SK-N-SH (cell line): ENCODE measurements at regions of chr1 and their contacts with region 1.

Region 1: GRCh38 chr1:44217809-44218410 is 4.6 kb downstream of the DMAP1 start:
- DNase-seq: peak; percentile 84
- H3K4me3 ChIP-seq: no peak overlapping the region; a peak in 1 of 4 replicates
- H3K27ac ChIP-seq: no peak overlapping the region
- H3K4me1 ChIP-seq: peaks cover 0 to 12% of the 10 kb centered on the region in 2 experiments; a peak in 1 of 4 replicates
- H3K27me3 ChIP-seq: no peaks in the 10 kb centered on the region
- CTCF ChIP-seq: peak; percentile 91
- EP300 ChIP-seq: no peak
- RAD21 ChIP-seq: peak; percentile 89

Region 2: GRCh38 chr1:43952731-43953346 is 265.1 kb before region 1 on chr1:
- CTCF ChIA-PET with region 1: no interaction called
- POLR2A ChIA-PET with region 1: no interaction called
- DNase-seq: no peak
- H3K4me3 ChIP-seq: no peak overlapping the region
- H3K27ac ChIP-seq: no peak overlapping the region
- H3K4me1 ChIP-seq: peaks cover 10 to 19% of the 10 kb centered on the region in 2 experiments
- H3K27me3 ChIP-seq: no peaks in the 10 kb centered on the region
- CTCF ChIP-seq: no peak
- EP300 ChIP-seq: no peak
- RAD21 ChIP-seq: no peak

Region 3: DNA sequence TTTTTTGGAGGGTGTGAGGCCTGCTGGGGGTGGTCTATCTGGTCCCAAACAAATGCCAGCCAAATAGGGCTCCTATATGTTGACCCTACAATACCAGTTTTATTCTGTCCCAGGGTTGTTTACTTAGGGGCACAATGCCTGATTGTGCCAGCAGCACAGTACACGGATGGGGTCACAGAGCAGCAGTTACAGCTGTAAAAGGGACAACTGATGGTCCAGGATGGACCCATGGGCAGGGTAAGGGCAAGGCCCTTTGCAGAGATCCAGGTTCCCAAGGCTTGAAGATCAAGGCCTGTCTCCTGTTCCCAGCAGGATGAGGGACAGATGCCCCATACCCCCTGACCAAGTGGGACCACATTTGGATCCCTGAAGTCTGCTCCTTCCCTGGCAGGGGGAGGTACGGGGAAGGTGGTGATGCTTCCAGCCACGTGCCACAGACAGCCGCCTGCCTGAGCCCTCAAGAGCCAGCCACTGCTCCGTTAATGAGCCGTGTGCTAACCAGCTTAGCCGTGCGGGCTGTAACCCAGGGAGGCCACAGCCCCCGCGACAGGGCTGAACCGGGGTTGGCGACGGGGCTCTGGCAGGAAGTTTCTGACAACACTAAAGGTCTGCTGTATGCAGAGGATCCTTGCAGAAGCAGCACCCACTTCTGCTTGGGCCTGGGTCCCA is 204.8 kb before region 1 on chr1:
- CTCF ChIA-PET with region 1: no interaction called
- POLR2A ChIA-PET with region 1: no interaction called
- DNase-seq: no peak
- H3K4me3 ChIP-seq: no peak overlapping the region
- H3K27ac ChIP-seq: no peak overlapping the region
- H3K4me1 ChIP-seq: peaks cover 3 to 6% of the 10 kb centered on the region in 2 experiments; a peak in 2 of 4 replicates
- H3K27me3 ChIP-seq: no peaks in the 10 kb centered on the region
- CTCF ChIP-seq: no peak
- EP300 ChIP-seq: no peak
- RAD21 ChIP-seq: no peak

Region 4: GRCh38 chr1:44249543-44249942 is 31.6 kb after region 1 on chr1:
- CTCF ChIA-PET with region 1: interaction called, 20 read pairs
- POLR2A ChIA-PET with region 1: no interaction called
- DNase-seq: peak; percentile 48
- H3K4me3 ChIP-seq: no peak overlapping the region
- H3K27ac ChIP-seq: no peak overlapping the region
- H3K4me1 ChIP-seq: peaks cover 0 to 5% of the 10 kb centered on the region in 2 experiments; a peak in 1 of 4 replicates
- H3K27me3 ChIP-seq: no peaks in the 10 kb centered on the region
- CTCF ChIP-seq: no peak
- EP300 ChIP-seq: no peak
- RAD21 ChIP-seq: no peak

Region 5: GRCh38 chr1:44283524-44284173 is 65.7 kb after region 1 on chr1:
- CTCF ChIA-PET with region 1: interaction called, 16 read pairs
- POLR2A ChIA-PET with region 1: no interaction called
- DNase-seq: no peak
- H3K4me3 ChIP-seq: no peak overlapping the region
- H3K27ac ChIP-seq: no peak overlapping the region
- H3K4me1 ChIP-seq: no peaks in the 10 kb centered on the region
- H3K27me3 ChIP-seq: no peaks in the 10 kb centered on the region
- CTCF ChIP-seq: no peak
- EP300 ChIP-seq: no peak
- RAD21 ChIP-seq: no peak

Region 6: DNA sequence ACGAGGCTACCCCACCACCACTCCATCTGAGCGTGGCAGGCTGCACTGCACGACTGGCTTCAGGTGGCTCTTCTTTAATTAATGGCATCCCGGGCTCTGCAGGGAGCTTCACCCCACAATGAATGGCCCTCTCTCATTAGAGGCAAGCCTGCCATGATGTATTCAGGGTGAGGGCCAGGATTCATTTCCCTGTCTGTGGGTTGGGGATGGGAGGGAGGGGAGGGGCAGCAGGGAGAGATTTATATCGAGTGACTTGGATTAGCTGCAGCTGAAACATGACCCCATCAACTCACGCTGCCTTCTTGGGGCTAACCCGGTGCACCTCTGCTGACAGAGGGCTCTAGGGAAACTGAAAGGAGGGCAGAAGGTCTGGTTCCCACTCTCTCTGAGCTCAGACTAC is 82.9 kb after region 1 on chr1:
- CTCF ChIA-PET with region 1: interaction called, 78 read pairs
- POLR2A ChIA-PET with region 1: no interaction called
- DNase-seq: no peak
- H3K4me3 ChIP-seq: no peak overlapping the region
- H3K27ac ChIP-seq: no peak overlapping the region
- H3K4me1 ChIP-seq: no peaks in the 10 kb centered on the region
- H3K27me3 ChIP-seq: no peaks in the 10 kb centered on the region
- CTCF ChIP-seq: no peak
- EP300 ChIP-seq: no peak
- RAD21 ChIP-seq: no peak

Region 7: DNA sequence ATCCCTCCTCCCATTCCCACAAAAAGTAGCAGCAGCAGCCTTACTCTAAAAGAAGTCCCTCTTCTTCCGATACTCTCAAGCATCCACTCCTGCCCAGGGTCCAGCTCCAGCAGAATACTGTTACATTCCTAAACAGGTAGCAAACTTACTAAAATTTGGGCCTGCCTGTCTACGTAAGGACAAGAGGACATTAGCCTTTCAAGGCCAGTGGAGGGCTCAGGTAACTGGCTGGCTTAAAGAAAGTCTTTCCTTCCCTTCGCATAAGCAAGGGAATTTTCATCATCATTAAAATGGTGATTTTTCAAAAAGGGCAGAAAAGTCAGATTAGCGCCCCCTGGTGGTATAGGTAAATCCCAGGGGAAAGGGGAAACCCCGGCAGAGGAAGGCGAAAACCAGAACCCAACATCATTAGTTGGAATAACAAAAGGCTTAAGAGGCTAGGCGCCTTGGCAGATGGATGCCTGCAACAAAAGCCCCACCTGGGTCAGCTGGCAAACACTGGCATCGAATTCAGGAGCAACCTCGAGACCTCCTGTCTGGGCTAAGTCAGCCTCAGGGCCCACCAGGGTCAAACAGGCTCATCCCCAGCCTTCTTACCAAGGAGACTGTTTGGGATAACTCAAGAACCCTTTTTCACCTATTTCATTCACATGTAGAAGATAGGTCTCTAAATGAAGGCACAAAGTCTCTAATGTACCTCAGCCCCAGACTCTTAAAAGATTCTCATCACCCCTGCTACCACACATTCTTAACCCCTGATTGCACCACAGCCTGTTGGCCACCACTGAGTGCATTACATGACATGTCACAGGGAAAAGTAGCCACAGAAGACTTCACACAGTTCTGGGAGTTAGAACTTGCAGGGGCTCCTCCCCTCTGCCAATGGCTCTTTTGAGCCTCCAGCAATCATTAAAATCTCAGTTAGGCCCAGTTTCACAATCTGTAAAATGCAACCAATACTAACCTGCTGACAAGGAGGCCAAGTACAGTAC is 100.5 kb after region 1 on chr1:
- CTCF ChIA-PET with region 1: interaction called, 89 read pairs
- POLR2A ChIA-PET with region 1: interaction called, 4 read pairs
- DNase-seq: peak; percentile 72
- H3K4me3 ChIP-seq: no peak overlapping the region
- H3K27ac ChIP-seq: no peak overlapping the region; a peak in 1 of 4 replicates
- H3K4me1 ChIP-seq: no peaks in the 10 kb centered on the region; a peak in 1 of 4 replicates
- H3K27me3 ChIP-seq: no peaks in the 10 kb centered on the region
- CTCF ChIP-seq: peak; percentile 94
- EP300 ChIP-seq: no peak
- RAD21 ChIP-seq: peak; percentile 55

Region 8: DNA sequence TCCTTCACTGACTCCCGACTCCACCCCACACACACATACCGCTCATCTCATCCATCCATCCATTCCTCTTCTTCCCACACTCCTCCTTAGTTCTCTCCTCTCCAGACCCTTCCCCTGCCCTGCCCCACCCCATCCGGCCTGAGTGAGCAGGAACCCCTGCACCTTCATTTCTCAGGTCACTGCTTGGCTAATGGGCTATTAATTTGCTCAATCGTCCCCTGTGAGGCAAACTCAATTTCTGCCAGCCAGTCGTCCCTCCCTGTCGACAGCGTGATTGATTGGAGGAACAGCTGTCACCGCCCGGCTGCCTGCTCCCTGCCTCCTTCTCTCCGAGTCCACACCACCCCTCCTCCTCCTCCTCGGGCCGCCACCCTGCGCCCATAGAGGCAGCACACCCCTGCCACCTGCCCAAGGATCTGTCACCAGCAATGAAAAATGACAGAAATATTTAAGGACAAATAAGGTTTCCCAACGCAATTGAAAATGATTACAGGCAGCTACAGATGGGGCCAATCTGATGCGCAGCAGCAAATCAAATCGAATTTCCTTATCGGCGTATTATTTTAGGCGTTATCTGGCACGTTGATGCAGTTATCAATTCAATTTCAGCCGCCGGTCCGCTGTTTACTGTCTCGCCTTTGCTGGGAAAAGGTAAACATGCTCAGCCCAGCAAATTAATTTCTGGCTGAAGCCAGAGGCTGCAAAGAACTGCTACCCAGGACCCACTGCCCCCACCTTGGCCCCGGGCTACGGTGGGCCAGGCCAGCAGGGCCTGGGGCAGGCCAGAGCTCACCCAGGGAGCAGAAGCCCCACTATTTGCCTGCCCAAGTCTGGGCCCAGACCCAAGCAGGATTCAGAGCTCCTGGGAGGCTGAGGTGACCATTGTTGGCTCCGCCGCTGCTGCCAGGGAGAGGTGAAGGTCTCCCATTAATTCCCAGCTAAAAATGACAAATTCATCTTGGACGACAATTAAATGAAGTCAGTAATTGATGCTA is 385.0 kb after region 1 on chr1:
- CTCF ChIA-PET with region 1: interaction called, 16 read pairs
- POLR2A ChIA-PET with region 1: no interaction called
- DNase-seq: peak; percentile 69
- H3K4me3 ChIP-seq: no peak overlapping the region; a peak in 1 of 4 replicates
- H3K27ac ChIP-seq: no peak overlapping the region
- H3K4me1 ChIP-seq: peaks cover 0 to 24% of the 10 kb centered on the region in 2 experiments; a peak in 2 of 4 replicates
- H3K27me3 ChIP-seq: peaks cover 25% of the 10 kb centered on the region; the same call in 1 of the 2 replicates
- CTCF ChIP-seq: no peak
- EP300 ChIP-seq: peak in 1 of 2 experiments; percentile 37; a peak in 1 of 4 replicates
- RAD21 ChIP-seq: no peak